ENCODE measurements at regions of chr3 and their contacts with region 1.

Region 1: DNA sequence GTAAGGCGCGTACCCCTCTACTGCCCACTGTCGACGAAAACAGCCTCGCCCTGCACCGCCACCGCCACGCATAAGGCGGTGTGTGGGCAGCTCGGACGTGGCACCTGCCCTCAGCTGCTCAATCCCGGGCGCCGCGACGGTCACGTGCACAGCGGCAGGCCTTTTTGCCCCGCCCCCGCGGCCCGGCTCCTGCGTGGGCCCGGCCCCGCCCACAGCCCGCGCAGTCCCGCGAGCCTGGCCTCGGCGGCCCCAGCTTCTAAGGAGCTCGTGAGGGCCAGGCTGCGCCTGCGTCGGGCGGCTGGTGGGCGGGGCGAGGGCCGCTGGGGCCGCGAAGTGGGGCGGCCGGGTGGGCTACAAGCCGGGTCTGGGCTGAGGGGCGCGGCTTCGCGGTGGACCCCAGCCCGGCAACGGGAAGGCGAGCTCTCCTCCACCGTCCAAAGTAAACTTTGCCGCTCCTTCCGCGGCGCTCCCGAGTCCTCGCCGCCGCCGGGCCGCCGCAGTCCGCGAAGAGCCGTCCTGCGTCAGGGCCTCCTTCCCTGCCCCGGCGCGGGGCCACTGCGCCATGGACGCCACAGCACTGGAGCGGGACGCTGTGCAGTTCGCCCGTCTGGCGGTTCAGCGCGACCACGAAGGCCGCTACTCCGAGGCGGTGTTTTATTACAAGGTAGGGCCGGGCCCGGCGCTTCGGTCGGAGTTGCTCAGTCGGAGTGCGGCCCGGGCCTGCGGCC is at the start of gene CAPN7:
- DNase-seq: no peak
- ATAC-seq: peak; percentile 98
- H3K4me3 ChIP-seq: peak within 1 kb of the TSS; percentile 88 to 91
- H3K27ac ChIP-seq: peak within 1 kb of the TSS; percentile 84
- H3K4me1 ChIP-seq: peaks cover 5% of the 10 kb centered on the region
- H3K27me3 ChIP-seq: no peaks in the 10 kb centered on the region
- CTCF ChIP-seq: 0 out of 2 replicates have a peak, but pooled peaks have one; percentile 21
- total RNA-seq, gene CAPN7: 26.5 TPM

Region 2: GRCh38 chr3:15108082-15108545 is 98.0 kb before region 1 on chr3:
- CTCF ChIA-PET with region 1: interaction called, 4 read pairs
- POLR2A ChIA-PET with region 1: no interaction called
- in situ Hi-C with region 1: no loop called
- intact Hi-C with region 1: loop called (anchors 2 kb)
- DNase-seq: peak; percentile 48
- ATAC-seq: peak; percentile 92
- H3K4me3 ChIP-seq: peak overlapping the region in 1 of 2 experiments; percentile 3; a peak in 1 of 4 replicates
- H3K27ac ChIP-seq: no peak overlapping the region
- H3K4me1 ChIP-seq: no peaks in the 10 kb centered on the region
- H3K27me3 ChIP-seq: no peaks in the 10 kb centered on the region
- CTCF ChIP-seq: peak; percentile 89

Region 3: GRCh38 chr3:15148614-15149013 is 57.5 kb before region 1 on chr3:
- CTCF ChIA-PET with region 1: no interaction called
- POLR2A ChIA-PET with region 1: no interaction called
- in situ Hi-C with region 1: no loop called
- intact Hi-C with region 1: no loop called
- DNase-seq: no peak
- ATAC-seq: no peak; the same call in 1 of the 2 replicates
- H3K4me3 ChIP-seq: no peak overlapping the region
- H3K27ac ChIP-seq: no peak overlapping the region
- H3K4me1 ChIP-seq: no peaks in the 10 kb centered on the region
- H3K27me3 ChIP-seq: peaks cover 24% of the 10 kb centered on the region
- CTCF ChIP-seq: no peak